HepG2 (cell line): ENCODE measurements at regions of chr19 and their contacts with region 1.

Region 1: DNA sequence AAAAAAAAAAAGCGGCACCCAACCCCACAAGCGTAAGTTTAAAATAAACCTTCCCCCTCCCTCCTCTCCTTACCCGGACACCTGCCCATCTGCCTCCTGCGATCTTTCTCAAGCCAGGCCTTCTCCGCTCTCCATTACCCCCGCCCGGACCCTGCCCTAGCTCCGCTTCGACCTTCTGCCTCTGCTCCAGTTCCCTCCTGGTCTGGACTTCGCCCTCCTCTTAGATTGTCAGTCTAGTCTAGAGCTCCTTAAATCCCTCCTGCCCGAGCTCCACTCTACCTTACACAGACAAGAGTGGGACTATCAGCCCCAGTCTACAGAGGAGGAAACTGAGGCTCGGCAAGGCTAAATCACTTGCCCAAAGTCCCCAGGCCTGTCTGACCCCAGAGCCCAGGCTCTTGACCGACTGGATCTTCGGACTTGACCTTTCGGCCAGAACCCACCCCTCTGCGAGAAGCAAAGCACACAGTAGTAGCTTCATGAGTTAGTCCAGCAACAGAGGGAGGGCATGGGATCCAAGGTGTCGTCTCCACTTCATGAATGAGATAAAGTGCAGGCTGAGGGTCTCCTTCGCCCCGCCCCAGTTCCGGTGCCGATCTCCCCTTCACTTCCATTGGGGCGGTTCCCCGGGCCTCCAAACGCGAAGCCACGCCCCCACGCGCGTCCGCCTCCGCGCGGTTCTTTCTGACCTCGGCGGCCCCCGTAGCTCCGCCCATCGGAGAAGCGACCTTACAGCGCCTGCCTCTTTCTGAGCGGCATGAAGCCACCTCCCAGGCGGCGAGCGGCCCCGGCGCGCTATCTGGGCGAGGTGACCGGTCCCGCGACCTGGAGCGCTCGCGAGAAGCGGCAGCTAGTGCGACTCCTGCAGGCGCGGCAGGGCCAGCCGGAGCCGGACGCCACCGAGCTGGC is at the start of gene SNAPC2:
- DNase-seq: peak; percentile 89
- ATAC-seq: peak; percentile 53
- H3K4me3 ChIP-seq: peak within 1 kb of the TSS; percentile 85 to 89 (median 87)
- H3K27ac ChIP-seq: peak within 1 kb of the TSS; percentile 92
- H3K4me1 ChIP-seq: peaks cover 41% of the 10 kb centered on the region
- H3K27me3 ChIP-seq: no peaks in the 10 kb centered on the region; a peak in 1 of 5 replicates
- CTCF ChIP-seq: no peak
- EP300 ChIP-seq: no peak; a peak in 1 of 4 replicates
- POLR2A ChIP-seq: peak; percentile 40 to 88; a peak in 3 of 4 replicates
- RAD21 ChIP-seq: peak; percentile 55
- total RNA-seq, gene SNAPC2: 9.5 and 10.2 TPM in 2 replicates

Region 2: DNA sequence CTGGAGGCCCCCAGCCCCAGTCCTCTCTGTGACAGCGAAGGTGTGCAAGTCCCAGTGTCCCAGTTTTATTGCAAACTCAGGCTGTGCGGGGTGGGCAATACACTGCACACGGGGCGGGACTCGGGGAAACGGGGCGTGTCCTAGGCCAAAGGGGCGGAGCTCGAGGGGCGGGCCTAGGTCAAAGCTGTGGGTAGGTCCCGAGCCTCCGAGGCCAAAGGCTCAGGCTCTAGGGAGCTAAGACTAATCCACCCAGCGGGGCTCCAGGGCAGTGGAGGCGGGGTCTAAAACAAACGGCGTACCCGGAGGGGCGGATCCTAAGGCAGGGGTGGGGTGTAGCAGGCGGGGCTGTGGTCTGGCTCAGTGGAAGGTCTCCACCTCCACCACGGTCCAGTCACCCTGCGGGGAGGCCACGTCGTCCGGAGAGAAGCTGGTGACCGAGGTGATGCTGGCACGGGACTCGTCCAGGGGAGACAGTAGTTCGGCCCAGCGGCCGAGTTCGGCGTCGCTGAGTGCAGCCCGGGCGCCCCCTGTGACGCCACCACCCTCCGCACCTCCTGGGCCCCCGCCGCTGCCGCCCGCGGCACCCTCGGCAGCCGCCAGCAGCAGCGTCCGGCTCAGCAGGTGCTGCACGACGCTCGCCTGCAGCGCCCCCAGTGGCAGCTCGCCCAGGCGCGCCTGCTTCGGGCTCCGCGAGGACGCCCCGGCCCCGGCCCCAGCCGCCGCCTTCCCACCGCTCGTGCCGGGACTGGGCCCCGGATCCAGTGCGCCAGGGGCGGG is 51.0 kb before region 1 on chr19:
- CTCF ChIA-PET with region 1: interaction called, 4 read pairs
- POLR2A ChIA-PET with region 1: interaction called, 67 read pairs
- in situ Hi-C with region 1: no loop called
- intact Hi-C with region 1: no loop called
- DNase-seq: peak; percentile 87
- ATAC-seq: peak; percentile 58
- H3K4me3 ChIP-seq: peak overlapping the region; percentile 53 to 74 (median 67)
- H3K27ac ChIP-seq: peak overlapping the region; percentile 78
- H3K4me1 ChIP-seq: peaks cover 70% of the 10 kb centered on the region
- H3K27me3 ChIP-seq: no peaks in the 10 kb centered on the region
- CTCF ChIP-seq: peak; percentile 70; the same call in 1 of the 2 replicates
- EP300 ChIP-seq: no peak
- POLR2A ChIP-seq: peak; percentile 46 to 48; a peak in 3 of 4 replicates
- RAD21 ChIP-seq: peak; percentile 83

Region 3: DNA sequence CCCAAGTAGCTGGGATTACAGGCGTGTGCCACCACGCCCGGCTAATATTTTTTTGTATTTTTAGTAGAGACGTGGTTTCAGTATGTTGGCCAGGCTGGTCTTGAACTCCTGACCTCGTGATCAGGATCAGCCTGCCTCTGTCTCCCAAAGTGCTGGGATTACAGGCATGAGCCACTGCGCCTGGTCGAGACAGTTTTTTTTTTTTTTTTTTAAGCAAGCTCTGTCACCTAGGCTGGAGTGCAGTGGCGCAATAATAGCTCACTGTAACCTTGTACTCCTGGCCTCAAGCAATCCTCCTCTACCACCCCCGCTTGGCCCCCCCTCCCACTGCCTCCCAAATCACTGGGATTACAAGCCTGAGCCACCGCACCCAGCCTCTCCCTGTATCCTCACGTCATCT is 22.6 kb before region 1 on chr19:
- CTCF ChIA-PET with region 1: no interaction called
- POLR2A ChIA-PET with region 1: interaction called, 83 read pairs
- in situ Hi-C with region 1: no loop called
- intact Hi-C with region 1: no loop called
- DNase-seq: peak; percentile 86
- ATAC-seq: peak; percentile 72
- H3K4me3 ChIP-seq: no peak overlapping the region
- H3K27ac ChIP-seq: peak overlapping the region; percentile 59
- H3K4me1 ChIP-seq: peaks cover 56% of the 10 kb centered on the region
- H3K27me3 ChIP-seq: no peaks in the 10 kb centered on the region
- CTCF ChIP-seq: no peak; the same call in 1 of the 2 replicates
- EP300 ChIP-seq: peak in 1 of 2 experiments; percentile 50; a peak in 1 of 4 replicates
- POLR2A ChIP-seq: no peak
- RAD21 ChIP-seq: no peak

Region 4: DNA sequence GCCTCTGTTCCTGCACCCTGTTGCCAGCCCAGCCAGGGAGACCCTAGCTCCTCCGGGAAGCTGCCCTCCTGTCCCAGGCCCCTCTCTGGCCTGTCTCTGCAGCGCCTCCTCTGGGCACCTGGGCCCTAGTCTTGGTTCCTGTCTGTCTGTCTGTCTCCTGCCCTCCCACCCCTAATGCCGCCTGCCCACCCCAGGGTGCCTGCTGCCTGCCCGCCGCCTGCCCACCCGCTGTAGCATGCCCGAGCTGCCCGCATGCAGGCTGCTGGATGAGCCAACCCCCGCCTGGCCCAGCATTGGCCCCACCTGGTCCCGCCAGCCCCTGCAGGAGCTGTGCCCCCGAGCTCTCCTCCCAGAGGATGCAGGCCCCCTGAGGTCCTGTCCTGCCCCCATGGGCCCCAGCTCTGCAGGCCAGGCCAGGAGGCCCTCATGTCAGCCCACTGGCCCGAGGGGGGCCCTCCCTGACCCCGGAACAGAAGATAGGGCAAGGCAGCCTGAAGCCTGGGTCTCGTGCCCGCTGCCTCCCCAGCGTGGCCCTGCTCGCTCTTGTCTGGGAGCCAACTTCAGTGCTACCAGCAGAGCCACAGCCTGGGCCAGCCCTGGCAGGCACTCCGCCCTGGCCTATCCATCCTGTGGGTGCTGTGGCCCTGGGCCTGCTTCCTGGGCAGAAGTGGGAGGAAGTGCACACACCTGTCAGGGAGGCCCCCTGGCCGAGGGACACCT is 11.0 kb before region 1 on chr19:
- CTCF ChIA-PET with region 1: no interaction called
- POLR2A ChIA-PET with region 1: interaction called, 83 read pairs
- in situ Hi-C with region 1: no loop called
- intact Hi-C with region 1: no loop called
- DNase-seq: no peak
- ATAC-seq: 0 out of 3 replicates have a peak, but pooled peaks have one; percentile 3
- H3K4me3 ChIP-seq: no peak overlapping the region
- H3K27ac ChIP-seq: no peak overlapping the region
- H3K4me1 ChIP-seq: peaks cover 21% of the 10 kb centered on the region
- H3K27me3 ChIP-seq: no peaks in the 10 kb centered on the region; a peak in 1 of 5 replicates
- CTCF ChIP-seq: no peak
- EP300 ChIP-seq: no peak
- POLR2A ChIP-seq: no peak
- RAD21 ChIP-seq: no peak